Cardiac septum (tissue), 1 donor: ENCODE measurements at regions of chr12 and their contacts with region 1.

Region 1: DNA sequence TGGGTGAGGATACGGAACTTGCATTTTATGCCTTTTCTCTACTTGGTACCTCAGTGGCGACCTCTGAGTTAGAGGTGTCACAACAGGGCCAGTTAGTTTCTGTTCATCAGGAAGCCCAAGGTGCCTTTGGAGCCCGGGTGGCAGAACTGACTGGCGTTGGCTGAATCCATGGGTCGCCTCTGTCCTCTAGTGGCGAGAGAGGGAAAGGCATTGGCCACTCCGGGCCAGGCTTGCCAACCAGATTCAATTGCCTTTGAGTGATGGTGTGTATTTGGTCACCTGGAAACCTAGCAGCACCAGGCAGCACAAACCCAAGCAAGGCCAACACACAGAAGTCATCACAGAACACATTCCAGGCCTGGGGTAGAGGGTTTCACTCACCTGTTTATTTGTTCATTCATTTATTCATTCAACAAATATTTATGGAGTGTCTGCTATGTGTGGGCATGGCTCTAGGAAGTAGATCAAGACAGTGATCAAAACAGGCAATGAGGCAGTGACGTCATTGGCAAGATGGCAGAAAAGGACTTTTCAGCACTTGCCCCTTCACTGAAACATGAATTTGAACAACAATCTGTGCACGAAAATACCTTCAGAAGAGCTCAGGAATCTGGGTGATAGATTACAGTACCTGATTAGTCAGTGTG is 40.5 kb upstream of the KCNA5 start:
- DNase-seq: peak; percentile 79

Region 2: DNA sequence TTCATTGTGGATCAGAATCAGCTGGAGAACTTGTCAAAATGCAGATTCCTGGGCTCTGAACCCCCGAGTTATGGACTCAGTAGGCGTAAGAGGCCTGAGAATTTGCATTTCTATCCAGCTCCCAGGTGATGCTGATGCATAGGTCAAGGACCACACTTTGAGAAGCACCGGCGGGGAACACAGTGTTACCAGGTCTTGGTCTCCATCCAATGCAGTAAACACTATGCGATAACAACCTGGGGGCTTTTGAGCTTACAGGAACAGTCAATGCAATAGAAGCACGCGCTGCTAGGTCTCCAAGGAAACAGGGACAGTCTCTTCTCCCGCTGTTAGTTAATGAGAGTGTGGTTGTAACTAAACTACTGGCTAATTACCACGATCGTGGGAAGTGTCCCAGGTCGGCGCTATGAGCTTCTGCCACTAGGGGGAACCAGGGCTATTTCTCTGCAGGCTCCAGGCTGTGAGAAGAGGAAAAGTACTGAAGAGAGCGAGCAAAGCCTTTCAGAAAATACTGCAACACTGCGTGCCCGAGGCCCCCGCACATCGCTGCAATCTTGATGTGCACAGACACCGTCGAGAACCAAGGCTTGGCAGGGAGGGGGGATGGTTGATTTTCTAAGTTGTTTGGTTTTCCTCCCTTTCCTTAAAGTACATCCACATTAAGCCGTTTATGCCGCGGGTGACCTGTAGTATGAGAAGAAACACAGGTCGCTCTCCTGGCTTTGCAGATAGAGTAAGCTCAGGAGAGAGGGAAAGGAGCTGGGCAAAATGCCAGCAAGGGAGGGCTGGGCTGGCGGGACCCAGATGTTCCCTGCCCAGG is 145.5 kb before region 1 on chr12:
- intact Hi-C with region 1: loop called (anchors 1 kb)
- DNase-seq: no peak